Caco-2 (cell line): ENCODE measurements at regions of chr3 and their contacts with region 1.

Region 1: DNA sequence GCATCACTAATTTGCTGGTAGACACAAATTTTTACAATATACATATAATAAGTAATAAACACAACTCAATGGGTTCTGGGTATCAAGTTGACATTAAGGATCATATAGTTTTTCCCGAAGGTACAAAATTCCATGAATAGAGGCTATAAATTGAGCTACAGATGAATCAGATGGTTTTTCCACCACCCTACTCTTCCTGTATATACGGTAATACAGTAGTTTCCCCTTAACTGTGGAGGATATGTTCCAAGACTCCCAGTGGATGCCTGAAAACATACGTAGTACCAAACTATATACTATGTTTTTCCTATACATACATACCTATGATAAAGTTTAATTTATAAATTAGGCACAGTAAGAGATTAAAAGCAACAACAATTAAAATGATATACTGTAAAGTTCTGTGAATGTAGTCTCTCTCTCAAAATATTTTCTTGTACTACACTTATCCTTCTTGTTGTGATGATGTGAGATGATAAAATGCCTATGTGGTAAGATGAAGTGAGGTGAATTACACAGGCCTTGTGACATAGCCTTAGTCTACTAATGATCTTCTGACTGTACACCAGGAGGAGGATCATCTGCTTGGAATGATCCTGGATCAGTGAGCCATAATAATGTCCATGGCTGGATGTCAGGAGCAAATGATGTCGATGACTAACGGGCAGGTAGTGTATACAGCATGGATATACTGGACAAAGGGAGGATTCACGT is 116.7 kb downstream of the NR1I2 start:
- DNase-seq: no peak
- H3K4me3 ChIP-seq: no peak overlapping the region
- H3K4me3 Mint-ChIP-seq: no peak overlapping the region
- H3K27ac Mint-ChIP-seq: no peak overlapping the region
- H3K4me1 ChIP-seq: no peaks in the 10 kb centered on the region
- H3K4me1 Mint-ChIP-seq: no peaks in the 10 kb centered on the region
- H3K27me3 ChIP-seq: no peaks in the 10 kb centered on the region
- H3K27me3 Mint-ChIP-seq: no peaks in the 10 kb centered on the region
- CTCF ChIP-seq: no peak

Region 2: GRCh38 chr3:119657887-119658702 is 240.5 kb before region 1 on chr3:
- CTCF ChIA-PET with region 1: no interaction called
- POLR2A ChIA-PET with region 1: no interaction called
- intact Hi-C with region 1: no loop called
- DNase-seq: no peak
- H3K4me3 ChIP-seq: no peak overlapping the region
- H3K4me3 Mint-ChIP-seq: no peak overlapping the region
- H3K27ac Mint-ChIP-seq: no peak overlapping the region
- H3K4me1 ChIP-seq: no peaks in the 10 kb centered on the region
- H3K4me1 Mint-ChIP-seq: no peaks in the 10 kb centered on the region
- H3K27me3 ChIP-seq: no peaks in the 10 kb centered on the region; the same call in 1 of the 2 replicates
- H3K27me3 Mint-ChIP-seq: no peaks in the 10 kb centered on the region
- CTCF ChIP-seq: no peak

Region 3: GRCh38 chr3:119930286-119930685 is 31.7 kb after region 1 on chr3:
- CTCF ChIA-PET with region 1: no interaction called
- POLR2A ChIA-PET with region 1: no interaction called
- intact Hi-C with region 1: loop called (anchors 1 kb)
- DNase-seq: no peak
- H3K4me3 ChIP-seq: no peak overlapping the region
- H3K4me3 Mint-ChIP-seq: no peak overlapping the region
- H3K27ac Mint-ChIP-seq: no peak overlapping the region
- H3K4me1 ChIP-seq: no peaks in the 10 kb centered on the region
- H3K4me1 Mint-ChIP-seq: no peaks in the 10 kb centered on the region
- H3K27me3 ChIP-seq: no peaks in the 10 kb centered on the region
- H3K27me3 Mint-ChIP-seq: no peaks in the 10 kb centered on the region
- CTCF ChIP-seq: no peak